ENCODE measurements at regions of chr1 and their contacts with region 1.

Region 1: DNA sequence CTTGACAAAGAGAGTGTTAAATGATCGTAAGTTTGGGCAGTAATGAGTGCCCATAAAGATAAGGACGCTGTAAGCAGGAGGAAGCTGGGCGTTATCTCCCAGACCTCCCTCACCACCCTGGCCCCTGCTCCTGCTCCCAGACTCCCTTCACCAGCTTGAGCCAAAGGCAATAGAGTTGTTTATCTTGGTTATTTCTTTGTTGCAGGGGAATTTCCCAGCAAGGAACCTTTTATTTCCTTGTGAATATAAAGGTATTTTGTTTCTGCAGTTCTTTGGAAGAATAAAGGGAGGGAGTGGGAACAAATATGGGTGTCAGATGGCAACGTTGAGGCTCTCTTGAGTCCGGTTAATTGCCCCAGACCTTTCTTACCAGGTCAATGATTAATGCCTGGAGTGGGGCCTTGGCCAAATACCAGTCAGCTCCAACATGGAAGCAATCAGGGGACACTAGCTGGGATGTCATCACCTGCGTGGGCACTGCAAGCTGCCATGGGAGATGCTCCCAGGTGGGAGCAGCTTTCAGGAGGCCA is 4.3 kb downstream of the PIGR start:
- DNase-seq: no peak
- ATAC-seq: no peak
- H3K4me3 ChIP-seq: no peak overlapping the region
- H3K27ac ChIP-seq: no peak overlapping the region
- H3K4me1 ChIP-seq: no peaks in the 10 kb centered on the region
- H3K27me3 ChIP-seq: peaks cover 4% of the 10 kb centered on the region; the same call in 1 of the 2 replicates
- CTCF ChIP-seq: no peak

Region 2: DNA sequence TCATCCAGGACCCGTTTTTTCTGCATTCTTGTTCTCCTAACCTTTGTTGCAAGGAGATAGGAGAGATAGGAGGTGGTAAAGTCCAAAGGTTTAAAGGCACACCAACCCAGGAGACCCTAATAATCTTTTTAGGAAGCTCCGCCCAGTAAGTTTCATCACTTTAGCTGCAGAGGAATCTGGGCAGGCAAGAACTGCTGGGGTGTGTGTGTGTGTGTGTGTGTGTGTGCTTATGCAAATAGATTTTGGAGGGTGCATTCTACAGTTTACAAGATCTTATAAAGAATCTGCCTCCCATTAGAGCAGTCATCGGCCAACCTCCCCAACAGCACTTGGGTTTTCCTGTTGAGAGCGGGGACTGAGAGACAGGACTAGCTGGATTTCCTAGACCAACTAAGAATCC is 165.7 kb before region 1 on chr1:
- CTCF ChIA-PET with region 1: interaction called, 14 read pairs
- POLR2A ChIA-PET with region 1: no interaction called
- in situ Hi-C with region 1: no loop called
- intact Hi-C with region 1: no loop called
- DNase-seq: no peak
- ATAC-seq: no peak
- H3K4me3 ChIP-seq: no peak overlapping the region
- H3K27ac ChIP-seq: no peak overlapping the region
- H3K4me1 ChIP-seq: no peaks in the 10 kb centered on the region
- H3K27me3 ChIP-seq: peaks cover 23% of the 10 kb centered on the region
- CTCF ChIP-seq: no peak